Activated naive CD4-positive, alpha-beta T cell treated with anti-CD3 and anti-CD28 coated beads, Interleukin-2, amount 10 ng/mL, durations not matched to agents 7 days and 5 days (primary cell): ENCODE measurements at regions of chr6 and their contacts with region 1.

Region 1: GRCh38 chr6:111565326-111566221 is 40.1 kb downstream of the TRAF3IP2 start:
- DNase-seq: peak; percentile 32
- H3K4me3 Mint-ChIP-seq: no peak overlapping the region
- H3K27ac Mint-ChIP-seq: peak overlapping the region; percentile 24
- H3K4me1 Mint-ChIP-seq: peaks cover 44% of the 10 kb centered on the region
- H3K27me3 Mint-ChIP-seq: no peaks in the 10 kb centered on the region

Region 2: DNA sequence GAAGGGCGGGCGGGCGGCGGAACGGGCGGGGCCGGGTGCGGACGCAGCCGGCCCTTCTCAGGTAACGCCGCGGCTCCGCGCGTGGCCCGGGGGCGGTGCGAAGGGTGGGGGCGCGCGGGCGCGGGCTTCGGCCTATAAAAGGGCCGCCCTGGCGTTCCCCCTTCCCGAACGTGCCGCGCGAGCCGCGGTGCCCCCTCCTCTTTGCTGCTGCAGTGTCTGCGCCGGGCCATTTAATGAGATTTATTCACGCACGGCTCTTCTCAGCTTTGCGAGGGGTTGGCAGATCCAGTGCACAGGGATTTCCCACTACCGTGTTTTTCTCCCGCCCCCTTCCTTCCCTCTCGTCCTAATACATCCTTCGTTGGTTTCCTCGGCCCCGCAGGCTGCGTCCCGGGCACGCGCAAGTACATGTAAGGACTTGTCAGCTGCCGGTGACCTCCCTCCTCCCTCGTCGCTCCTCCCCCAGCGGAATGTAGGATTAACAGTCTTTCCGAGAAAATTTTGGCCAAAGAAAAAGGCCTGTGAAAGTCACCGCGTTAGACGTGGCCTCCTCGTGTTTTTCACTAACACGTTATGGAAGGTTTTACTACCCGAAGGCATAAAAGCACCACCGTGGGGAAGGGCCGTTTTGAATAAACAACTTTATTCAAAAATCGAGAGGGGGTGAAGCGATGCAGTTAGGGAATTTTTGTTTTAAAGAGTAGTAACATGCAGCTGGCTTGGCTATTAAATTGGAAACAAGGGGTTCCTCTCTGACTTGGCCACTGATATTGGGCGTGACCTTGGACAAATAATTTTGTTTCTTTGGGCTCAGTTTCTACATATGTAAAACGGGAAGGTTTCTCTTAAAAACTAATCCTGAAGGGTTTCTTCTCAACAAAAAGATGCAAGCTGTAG is 81.6 kb before region 1 on chr6:
- CTCF ChIA-PET with region 1: interaction called, 16 read pairs
- DNase-seq: peak; percentile 87
- H3K4me3 Mint-ChIP-seq: peak overlapping the region; percentile 98
- H3K27ac Mint-ChIP-seq: peak overlapping the region; percentile 100
- H3K4me1 Mint-ChIP-seq: peaks cover 56% of the 10 kb centered on the region
- H3K27me3 Mint-ChIP-seq: no peaks in the 10 kb centered on the region